SK-N-SH (cell line): ENCODE measurements at regions of chr1 and their contacts with region 1.

Region 1: DNA sequence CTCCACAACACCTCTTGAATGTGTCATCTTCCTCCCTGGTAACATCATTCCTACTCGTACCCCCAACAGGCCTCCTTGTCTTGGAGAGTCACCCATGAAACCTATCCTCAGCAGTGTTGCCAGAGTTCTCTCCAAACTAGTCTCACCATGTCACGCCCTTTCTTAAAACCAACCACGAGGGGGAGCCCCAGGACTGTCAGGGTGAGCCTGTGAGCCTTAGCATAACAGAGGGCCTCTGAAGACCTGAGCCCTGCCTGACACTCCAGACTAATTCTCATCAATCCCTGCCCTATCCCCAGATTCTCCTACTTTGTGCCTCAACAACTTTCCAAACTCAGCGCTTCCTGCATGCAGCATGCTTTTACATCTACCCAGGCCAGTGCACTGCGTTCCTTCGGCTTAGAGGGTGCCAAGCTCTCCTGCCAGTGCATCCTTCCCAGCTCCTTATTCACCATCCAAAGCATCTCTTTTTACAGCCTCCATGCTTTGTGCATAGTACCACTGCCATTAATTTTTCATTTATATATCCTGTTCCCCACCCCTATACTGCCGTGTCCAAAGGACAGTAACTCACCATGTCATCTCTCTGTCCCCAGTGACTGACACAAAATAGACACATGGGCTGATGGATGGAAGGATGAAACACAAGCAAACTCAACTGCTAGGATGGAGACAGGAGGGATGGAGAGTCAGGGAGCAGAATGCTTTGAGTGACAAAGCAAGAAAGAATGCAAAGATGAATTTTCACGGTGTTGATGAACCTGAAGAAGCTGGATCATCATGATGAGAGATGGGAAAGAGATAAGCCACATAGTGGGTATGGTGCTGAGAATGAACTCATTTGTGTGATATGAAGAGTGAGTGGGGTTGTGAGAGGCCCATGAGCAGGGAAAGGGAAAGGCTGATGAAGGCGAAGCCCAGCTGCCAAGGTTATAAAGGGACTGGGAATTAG is 34.0 kb downstream of the ZNF697 start:
- DNase-seq: peak; percentile 75
- H3K4me3 ChIP-seq: no peak overlapping the region
- H3K27ac ChIP-seq: no peak overlapping the region
- H3K4me1 ChIP-seq: peaks cover 0 to 2% of the 10 kb centered on the region in 2 experiments; a peak in 1 of 4 replicates
- H3K27me3 ChIP-seq: no peaks in the 10 kb centered on the region
- CTCF ChIP-seq: peak; percentile 79
- EP300 ChIP-seq: no peak
- RAD21 ChIP-seq: peak; percentile 91

Region 2: GRCh38 chr1:119631433-119632102 is 17.5 kb after region 1 on chr1:
- CTCF ChIA-PET with region 1: interaction called, 39 read pairs
- POLR2A ChIA-PET with region 1: no interaction called
- DNase-seq: peak; percentile 96
- H3K4me3 ChIP-seq: peak overlapping the region in 1 of 2 experiments; percentile 24; a peak in 2 of 4 replicates
- H3K27ac ChIP-seq: peak overlapping the region; percentile 58 to 67
- H3K4me1 ChIP-seq: peaks cover 22 to 28% of the 10 kb centered on the region in 2 experiments
- H3K27me3 ChIP-seq: no peaks in the 10 kb centered on the region
- CTCF ChIP-seq: no peak
- EP300 ChIP-seq: peak; percentile 61 to 78
- RAD21 ChIP-seq: peak; percentile 16; the same call in 1 of the 2 replicates

Region 3: GRCh38 chr1:119656410-119656955 is 42.4 kb after region 1 on chr1:
- CTCF ChIA-PET with region 1: interaction called, 52 read pairs
- POLR2A ChIA-PET with region 1: no interaction called
- DNase-seq: no peak
- H3K4me3 ChIP-seq: no peak overlapping the region
- H3K27ac ChIP-seq: no peak overlapping the region
- H3K4me1 ChIP-seq: no peaks in the 10 kb centered on the region
- H3K27me3 ChIP-seq: no peaks in the 10 kb centered on the region
- CTCF ChIP-seq: no peak
- EP300 ChIP-seq: no peak
- RAD21 ChIP-seq: no peak

Region 4: DNA sequence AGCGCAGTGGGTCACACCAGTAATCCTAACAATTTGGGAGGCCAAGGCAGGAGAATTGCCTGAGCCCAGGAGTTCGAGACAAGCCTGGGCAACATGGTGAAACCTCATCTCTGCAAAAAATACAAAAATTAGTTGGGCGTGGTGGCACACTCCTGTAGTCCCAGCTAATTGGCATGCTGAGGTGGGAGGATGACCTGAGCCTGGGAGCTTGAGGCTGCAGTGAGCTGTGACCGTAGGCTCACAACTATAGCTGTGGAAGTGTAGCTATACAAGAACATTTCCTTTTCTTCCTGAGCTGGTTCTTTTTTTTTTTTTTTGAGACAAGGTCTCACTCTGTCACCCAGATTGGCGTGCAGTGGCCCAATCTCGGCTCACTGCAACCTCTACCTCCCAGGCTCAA is 53.1 kb after region 1 on chr1:
- CTCF ChIA-PET with region 1: interaction called, 52 read pairs
- POLR2A ChIA-PET with region 1: interaction called, 3 read pairs
- DNase-seq: no peak
- H3K4me3 ChIP-seq: no peak overlapping the region
- H3K27ac ChIP-seq: no peak overlapping the region
- H3K4me1 ChIP-seq: no peaks in the 10 kb centered on the region
- H3K27me3 ChIP-seq: no peaks in the 10 kb centered on the region
- CTCF ChIP-seq: no peak
- EP300 ChIP-seq: no peak
- RAD21 ChIP-seq: no peak